ENCODE measurements at regions of chr2 and their contacts with region 1.

Region 1: DNA sequence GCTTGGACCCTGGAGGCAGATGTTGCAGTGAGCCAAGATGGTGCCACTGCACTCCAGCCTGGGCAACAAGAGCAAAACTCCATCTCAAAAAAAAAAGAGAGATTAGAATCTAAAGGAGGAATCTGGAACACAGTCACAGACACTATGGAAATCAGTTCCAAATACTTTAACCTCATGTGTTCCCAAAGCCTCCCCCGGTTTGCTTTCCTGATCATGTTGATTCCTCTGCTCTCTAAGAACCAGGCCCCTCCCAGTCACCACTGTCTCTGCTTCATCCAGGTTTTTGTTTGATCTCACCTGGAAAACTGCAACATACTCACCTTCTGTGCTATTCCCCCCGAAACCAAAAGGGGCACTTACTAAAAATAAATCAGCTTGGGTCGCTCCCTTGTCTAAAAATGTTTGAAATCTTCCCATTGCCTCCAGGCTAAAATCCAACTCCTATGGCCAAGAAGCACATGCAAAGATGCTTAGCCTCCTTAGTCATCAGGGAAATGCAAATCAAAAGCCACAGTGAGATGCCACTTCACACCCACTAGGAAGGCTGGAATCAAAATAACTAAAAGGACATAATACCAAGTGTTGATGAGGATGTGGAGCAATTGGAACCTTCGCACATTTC is 6.2 kb upstream of the NEU2 start:
- DNase-seq: peak; percentile 73
- H3K4me3 ChIP-seq: no peak overlapping the region
- H3K27ac ChIP-seq: peak overlapping the region; percentile 22
- H3K4me1 ChIP-seq: peaks cover 15% of the 10 kb centered on the region
- H3K27me3 ChIP-seq: no peaks in the 10 kb centered on the region
- CTCF ChIP-seq: no peak

Region 2: DNA sequence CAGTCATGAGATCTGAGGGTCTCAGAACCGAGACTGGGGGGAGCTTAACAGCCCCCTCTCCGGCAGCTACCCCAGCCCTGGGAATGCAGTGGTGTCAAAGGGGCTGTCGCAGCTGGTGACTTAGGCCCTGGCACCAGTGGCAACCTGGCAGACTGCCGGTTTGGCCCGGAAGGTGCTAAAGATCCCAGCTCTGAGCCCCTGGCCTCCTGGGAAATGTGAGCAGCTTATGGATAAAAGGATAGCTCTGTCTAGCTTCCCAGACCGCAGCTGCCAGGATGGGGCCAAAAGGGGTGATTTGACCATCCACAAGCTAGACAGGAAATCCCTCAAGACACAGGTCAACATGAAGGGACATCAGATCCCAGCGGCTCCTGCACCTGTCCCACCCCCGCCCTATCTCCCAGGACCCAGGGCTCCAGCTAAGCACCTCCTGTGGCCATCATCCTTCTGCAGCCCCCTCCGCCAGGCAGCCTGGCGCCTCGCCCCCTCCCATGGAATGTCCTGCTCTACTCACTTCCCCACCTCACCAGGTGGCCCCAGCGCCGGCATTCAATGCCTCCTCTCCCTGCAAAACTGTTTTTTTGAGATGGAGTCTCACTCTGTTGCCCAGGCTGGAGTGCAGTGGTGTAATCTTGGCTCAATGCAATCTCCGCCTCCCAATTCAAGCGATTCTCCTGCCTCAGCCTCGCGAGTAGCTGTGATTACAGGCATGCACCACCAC is 426.1 kb before region 1 on chr2:
- CTCF ChIA-PET with region 1: no interaction called
- dilution Hi-C with region 1: no loop called
- in situ Hi-C with region 1: no loop called
- intact Hi-C with region 1: loop called (anchors 10 kb)
- DNase-seq: no peak
- H3K4me3 ChIP-seq: no peak overlapping the region
- H3K27ac ChIP-seq: no peak overlapping the region
- H3K4me1 ChIP-seq: no peaks in the 10 kb centered on the region
- H3K27me3 ChIP-seq: no peaks in the 10 kb centered on the region
- CTCF ChIP-seq: no peak

Region 3: DNA sequence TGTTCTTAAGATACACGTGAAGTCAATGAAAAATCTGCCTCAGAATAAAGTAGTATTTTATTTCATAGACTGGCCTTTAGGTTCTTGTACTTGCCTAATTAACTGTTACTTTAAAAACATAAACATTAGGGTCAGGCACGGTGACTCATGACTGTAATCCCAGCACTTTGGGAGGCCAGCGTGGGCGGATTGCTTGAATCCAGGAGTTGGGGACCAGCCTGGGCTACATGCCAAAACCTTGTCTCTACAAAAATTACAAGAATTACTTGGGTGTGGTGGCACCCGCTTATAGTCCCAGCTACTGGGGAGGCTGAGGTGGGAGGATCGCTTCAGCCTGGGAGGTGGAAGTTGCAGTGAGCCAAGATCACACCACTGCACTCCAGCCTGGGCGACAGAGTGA is 172.2 kb before region 1 on chr2:
- CTCF ChIA-PET with region 1: no interaction called
- dilution Hi-C with region 1: no loop called
- in situ Hi-C with region 1: no loop called
- intact Hi-C with region 1: loop called (anchors 1 kb)
- DNase-seq: peak; percentile 77
- H3K4me3 ChIP-seq: no peak overlapping the region
- H3K27ac ChIP-seq: no peak overlapping the region
- H3K4me1 ChIP-seq: peaks cover 15% of the 10 kb centered on the region
- H3K27me3 ChIP-seq: no peaks in the 10 kb centered on the region
- CTCF ChIP-seq: no peak

Region 4: DNA sequence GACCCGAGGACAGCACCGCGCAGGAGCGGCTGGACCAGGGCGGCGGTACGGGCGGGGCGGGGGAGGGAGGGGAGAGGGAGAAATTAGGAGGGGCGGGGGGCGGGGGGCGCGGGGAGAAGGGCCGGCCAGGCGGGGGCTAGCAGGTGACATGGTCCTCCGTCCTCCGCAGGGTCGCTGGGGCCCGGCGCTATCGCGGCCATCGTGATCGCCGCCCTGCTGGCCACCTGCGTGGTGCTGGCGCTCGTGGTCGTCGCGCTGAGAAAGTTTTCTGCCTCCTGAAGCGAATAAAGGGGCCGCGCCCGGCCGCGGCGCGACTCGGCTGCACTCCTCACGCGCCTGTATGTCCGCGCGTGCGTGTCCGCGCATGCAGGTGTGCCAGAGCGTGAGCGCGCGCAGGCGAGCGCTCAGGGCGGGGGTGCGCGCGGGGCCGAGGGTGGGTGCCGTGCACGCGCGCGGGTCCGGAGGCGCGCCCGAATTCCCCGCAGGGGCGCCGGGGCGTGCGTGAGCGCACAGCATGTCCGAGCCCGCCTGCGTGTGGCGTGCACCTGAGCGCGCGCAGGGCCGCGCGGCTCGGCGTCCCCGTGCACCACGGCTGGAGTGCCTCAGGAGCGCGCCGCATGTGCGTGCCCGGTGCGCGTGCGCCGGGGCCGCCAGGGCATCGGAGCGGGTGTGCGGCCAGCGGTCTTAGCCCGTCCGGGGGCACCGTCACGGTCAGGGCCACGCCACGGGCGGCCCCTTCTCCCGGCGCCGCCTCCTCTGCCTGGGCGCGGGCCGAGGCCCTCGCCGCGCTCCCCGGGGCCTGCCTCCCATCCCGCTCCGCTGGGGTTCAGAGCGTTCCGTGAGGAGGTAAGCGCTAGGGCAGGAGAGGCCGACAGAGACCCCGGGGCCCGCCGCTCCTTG is 150.0 kb before region 1 on chr2:
- CTCF ChIA-PET with region 1: no interaction called
- dilution Hi-C with region 1: no loop called
- in situ Hi-C with region 1: loop called in 1 of 2 experiments (anchors 25 kb)
- intact Hi-C with region 1: no loop called
- DNase-seq: peak; percentile 14
- H3K4me3 ChIP-seq: peak overlapping the region in 2 of 3 experiments; percentile 46 to 54
- H3K27ac ChIP-seq: no peak overlapping the region
- H3K4me1 ChIP-seq: peaks cover 15% of the 10 kb centered on the region
- H3K27me3 ChIP-seq: no peaks in the 10 kb centered on the region
- CTCF ChIP-seq: peak in 1 of 2 donors; percentile 34

Region 5: GRCh38 chr2:232979871-232980461 is 46.3 kb before region 1 on chr2:
- CTCF ChIA-PET with region 1: no interaction called
- dilution Hi-C with region 1: no loop called
- in situ Hi-C with region 1: no loop called
- intact Hi-C with region 1: loop called (anchors 1 kb)
- DNase-seq: peak; percentile 55
- H3K4me3 ChIP-seq: no peak overlapping the region
- H3K27ac ChIP-seq: no peak overlapping the region
- H3K4me1 ChIP-seq: peaks cover 22% of the 10 kb centered on the region
- H3K27me3 ChIP-seq: no peaks in the 10 kb centered on the region
- CTCF ChIP-seq: peak in 1 of 2 donors; percentile 34

Measured in mammary epithelial cell (primary cell).